Activated CD4-positive, alpha-beta T cell treated with anti-CD3 and anti-CD28 coated beads for 36 hours (primary cell): ENCODE measurements at regions of chr6 and their contacts with region 1.

Region 1: GRCh38 chr6:137641474-137642077 is 147.4 kb upstream of the OLIG3 start:
- DNase-seq: peak; percentile 81
- ATAC-seq: peak; percentile 77
- H3K4me3 Mint-ChIP-seq: no peak overlapping the region
- H3K27ac Mint-ChIP-seq: no peak overlapping the region
- H3K4me1 Mint-ChIP-seq: peaks cover 13% of the 10 kb centered on the region
- H3K27me3 Mint-ChIP-seq: peaks cover 10% of the 10 kb centered on the region

Region 2: DNA sequence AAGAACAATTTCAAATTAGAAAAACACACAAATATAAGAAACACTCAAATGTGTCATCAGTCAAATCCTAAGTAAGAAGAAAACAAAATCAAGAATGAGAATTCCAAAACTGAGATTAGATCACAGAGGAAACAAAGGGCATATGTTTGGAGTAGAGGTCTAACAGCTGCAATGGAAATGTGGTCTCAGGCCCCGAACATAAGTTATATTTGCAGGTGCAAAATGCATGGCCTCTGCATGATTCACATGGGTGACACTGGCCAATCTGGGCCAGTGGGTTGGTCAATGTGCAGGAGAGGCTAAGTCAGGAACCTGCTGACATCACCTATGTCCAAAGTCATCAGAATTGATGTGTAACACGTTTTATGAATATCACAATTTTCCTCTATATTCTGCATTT is 982.9 kb before region 1 on chr6:
- CTCF ChIA-PET with region 1: no interaction called
- POLR2A ChIA-PET with region 1: no interaction called
- intact Hi-C with region 1: no loop called
- DNase-seq: no peak
- ATAC-seq: no peak
- H3K4me3 Mint-ChIP-seq: no peak overlapping the region
- H3K27ac Mint-ChIP-seq: no peak overlapping the region
- H3K4me1 Mint-ChIP-seq: no peaks in the 10 kb centered on the region
- H3K27me3 Mint-ChIP-seq: no peaks in the 10 kb centered on the region

Region 3: GRCh38 chr6:137001299-137001976 is 640.1 kb before region 1 on chr6:
- CTCF ChIA-PET with region 1: no interaction called
- POLR2A ChIA-PET with region 1: no interaction called
- intact Hi-C with region 1: no loop called
- DNase-seq: no peak
- ATAC-seq: no peak
- H3K4me3 Mint-ChIP-seq: no peak overlapping the region
- H3K27ac Mint-ChIP-seq: no peak overlapping the region
- H3K4me1 Mint-ChIP-seq: no peaks in the 10 kb centered on the region
- H3K27me3 Mint-ChIP-seq: peaks cover 13% of the 10 kb centered on the region

Region 4: DNA sequence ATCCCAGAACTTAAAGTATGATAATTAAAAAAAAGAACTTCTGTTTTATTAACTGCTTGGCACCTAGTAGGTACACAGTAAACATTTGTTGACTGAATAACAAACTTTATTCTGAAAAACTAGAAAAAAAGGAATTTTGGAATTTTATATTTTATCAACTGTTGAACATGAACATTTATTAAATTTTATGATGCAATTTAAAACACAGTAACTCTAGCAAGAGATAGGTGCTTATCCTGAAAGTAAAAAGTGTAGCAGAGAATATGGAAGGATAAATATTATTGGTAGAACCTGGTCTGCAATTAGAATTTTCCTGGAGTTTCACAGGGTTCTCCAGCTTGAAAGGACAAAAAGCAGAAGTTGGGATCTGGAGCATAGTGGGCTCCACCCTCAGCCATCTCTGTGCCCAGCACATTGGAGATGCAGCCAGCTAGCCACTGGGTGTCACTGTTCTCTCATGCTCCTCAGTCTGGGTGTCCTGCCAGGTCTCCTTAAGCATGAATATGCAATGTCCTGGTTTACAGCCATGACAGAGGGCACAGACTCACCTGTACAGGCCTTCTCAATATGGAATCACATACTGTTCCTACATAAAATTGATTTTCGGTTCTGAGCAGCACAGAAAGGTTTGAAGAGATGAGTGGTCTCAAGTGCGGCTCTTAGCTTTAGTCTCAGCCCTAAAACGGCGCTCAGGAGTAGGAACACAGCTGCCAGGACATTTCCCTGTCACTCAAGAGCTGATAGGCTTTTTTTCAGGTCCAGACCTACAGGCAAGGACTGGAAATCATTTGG is 565.1 kb before region 1 on chr6:
- CTCF ChIA-PET with region 1: interaction called, 3 read pairs
- POLR2A ChIA-PET with region 1: no interaction called
- intact Hi-C with region 1: loop called (anchors 1 to 2 kb)
- DNase-seq: peak; percentile 78
- ATAC-seq: peak; percentile 92
- H3K4me3 Mint-ChIP-seq: no peak overlapping the region
- H3K27ac Mint-ChIP-seq: no peak overlapping the region
- H3K4me1 Mint-ChIP-seq: no peaks in the 10 kb centered on the region
- H3K27me3 Mint-ChIP-seq: peaks cover 27% of the 10 kb centered on the region

Region 5: DNA sequence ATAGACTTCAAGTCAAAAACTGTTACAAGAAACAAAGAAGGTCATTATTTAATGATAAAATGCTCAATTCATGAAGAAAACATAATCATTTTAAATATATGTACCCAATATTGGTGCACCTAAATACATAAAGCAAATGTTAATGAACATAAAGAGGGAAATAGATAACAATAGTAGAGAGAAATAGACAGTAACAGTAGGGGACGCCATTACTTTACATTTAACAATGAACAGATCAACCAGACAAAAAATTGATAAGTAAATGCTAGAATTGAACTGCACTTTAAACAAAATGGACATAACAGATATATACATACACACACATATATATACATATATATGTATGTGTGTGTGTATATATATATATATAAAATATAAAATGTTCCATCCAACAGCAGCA is 505.5 kb before region 1 on chr6:
- CTCF ChIA-PET with region 1: no interaction called
- POLR2A ChIA-PET with region 1: no interaction called
- intact Hi-C with region 1: loop called in 1 of 2 experiments (anchors 5 kb)
- DNase-seq: no peak
- ATAC-seq: no peak
- H3K4me3 Mint-ChIP-seq: no peak overlapping the region
- H3K27ac Mint-ChIP-seq: no peak overlapping the region
- H3K4me1 Mint-ChIP-seq: no peaks in the 10 kb centered on the region
- H3K27me3 Mint-ChIP-seq: peaks cover 14% of the 10 kb centered on the region

Region 6: DNA sequence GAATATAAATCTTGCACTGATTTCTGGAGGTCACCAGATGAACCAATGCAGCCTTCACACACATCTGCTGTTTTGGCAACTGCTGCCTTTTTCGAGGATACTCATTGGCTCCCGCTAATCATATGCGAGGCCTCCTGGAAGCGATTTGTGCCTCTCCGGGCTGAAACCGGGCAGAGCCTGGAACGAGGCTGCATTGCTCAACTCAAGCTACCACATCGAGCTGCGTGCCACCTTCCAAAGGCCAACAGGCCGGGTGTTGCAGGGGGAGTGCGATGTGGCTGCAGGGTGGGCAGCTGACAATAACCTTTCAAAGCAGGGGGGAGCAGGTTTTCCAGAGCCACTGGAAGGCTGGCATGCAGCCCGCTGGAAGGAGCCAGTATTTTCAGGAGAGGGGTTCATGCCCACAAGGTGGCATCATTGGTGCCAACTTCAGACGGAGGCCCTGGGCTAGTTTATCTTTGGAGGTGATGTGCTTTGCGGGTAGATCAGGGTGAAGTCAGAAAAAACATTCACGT is 299.8 kb before region 1 on chr6:
- CTCF ChIA-PET with region 1: interaction called, 3 read pairs
- POLR2A ChIA-PET with region 1: no interaction called
- intact Hi-C with region 1: loop called (anchors 1 kb)
- DNase-seq: peak; percentile 60
- ATAC-seq: peak; percentile 47
- H3K4me3 Mint-ChIP-seq: peak overlapping the region; percentile 19
- H3K27ac Mint-ChIP-seq: no peak overlapping the region
- H3K4me1 Mint-ChIP-seq: peaks cover 7% of the 10 kb centered on the region
- H3K27me3 Mint-ChIP-seq: peaks cover 7% of the 10 kb centered on the region

Region 7: GRCh38 chr6:137497721-137498463 is 143.7 kb before region 1 on chr6:
- CTCF ChIA-PET with region 1: interaction called, 4 read pairs
- POLR2A ChIA-PET with region 1: no interaction called
- intact Hi-C with region 1: loop called (anchors 2 to 5 kb)
- DNase-seq: peak; percentile 33
- ATAC-seq: peak; percentile 11
- H3K4me3 Mint-ChIP-seq: peak overlapping the region; percentile 38
- H3K27ac Mint-ChIP-seq: no peak overlapping the region
- H3K4me1 Mint-ChIP-seq: peaks cover 42% of the 10 kb centered on the region
- H3K27me3 Mint-ChIP-seq: peaks cover 69% of the 10 kb centered on the region